Spleen (tissue), 13 donors: ENCODE measurements at regions of chr18 and their contacts with region 1.

Region 1: GRCh38 chr18:40832362-40832761 is 1122.7 kb upstream of the PIK3C3 start:
- DNase-seq: no peak
- H3K4me3 ChIP-seq: no peak overlapping the region
- H3K27ac ChIP-seq: no peak overlapping the region
- H3K4me1 ChIP-seq: no peaks in the 10 kb centered on the region
- H3K27me3 ChIP-seq: no peaks in the 10 kb centered on the region
- CTCF ChIP-seq: no peak
- POLR2A ChIP-seq: no peak

Region 2: DNA sequence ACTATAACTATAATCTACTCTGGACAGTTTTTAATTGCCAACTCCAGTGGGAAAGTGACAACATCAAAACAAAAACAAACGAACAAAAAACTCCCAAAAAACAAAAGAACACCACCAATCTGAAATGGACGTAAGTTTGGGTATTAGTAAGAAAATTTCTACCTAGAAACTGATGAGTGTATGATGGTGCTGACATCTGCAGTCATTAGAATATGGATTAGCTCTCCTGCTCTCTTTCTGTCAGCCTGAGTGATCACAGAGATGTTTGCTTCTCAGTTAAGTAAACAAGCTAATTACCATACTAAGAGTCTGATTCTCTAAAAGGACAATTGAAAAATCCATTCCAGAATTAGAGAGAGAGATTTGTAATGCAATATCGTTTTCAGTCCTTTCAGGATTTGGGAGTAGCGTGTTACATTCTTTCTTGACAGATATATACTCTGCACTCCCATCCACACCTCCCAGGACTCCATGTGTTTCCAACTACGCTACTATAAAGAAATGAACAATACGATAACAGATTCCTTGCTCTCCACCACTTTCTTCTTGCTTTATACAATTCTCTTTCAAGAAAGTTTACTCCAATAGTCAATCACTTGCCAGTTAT is 224.7 kb before region 1 on chr18:
- intact Hi-C with region 1: no loop called
- DNase-seq: no peak
- H3K4me3 ChIP-seq: no peak overlapping the region
- H3K27ac ChIP-seq: no peak overlapping the region
- H3K4me1 ChIP-seq: no peaks in the 10 kb centered on the region
- H3K27me3 ChIP-seq: no peaks in the 10 kb centered on the region
- CTCF ChIP-seq: no peak
- POLR2A ChIP-seq: no peak

Region 3: GRCh38 chr18:40670668-40671375 is 161.5 kb before region 1 on chr18:
- intact Hi-C with region 1: no loop called
- DNase-seq: no peak
- H3K4me3 ChIP-seq: no peak overlapping the region
- H3K27ac ChIP-seq: no peak overlapping the region
- H3K4me1 ChIP-seq: no peaks in the 10 kb centered on the region
- H3K27me3 ChIP-seq: no peaks in the 10 kb centered on the region
- CTCF ChIP-seq: no peak
- POLR2A ChIP-seq: no peak

Region 4: DNA sequence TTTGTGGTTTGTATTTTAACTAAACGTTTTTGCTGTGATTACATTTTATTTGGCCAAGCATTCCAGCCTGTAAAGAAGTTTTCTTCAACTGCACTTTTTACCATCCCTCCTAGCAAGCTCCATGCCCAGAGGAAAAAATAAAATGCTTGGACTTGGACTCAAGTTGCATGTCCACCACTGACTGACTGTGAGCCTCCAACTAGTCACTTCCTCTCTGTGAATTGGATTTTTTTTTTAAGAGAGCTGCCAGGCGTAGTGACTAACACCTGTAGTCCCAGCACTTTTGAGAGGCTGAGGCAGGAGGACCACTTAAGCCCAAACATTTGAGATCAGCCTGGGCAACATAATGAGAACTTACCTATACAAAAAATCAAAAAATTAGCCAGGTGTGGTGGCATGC is 62.6 kb before region 1 on chr18:
- intact Hi-C with region 1: loop called (anchors 10 kb)
- DNase-seq: no peak
- H3K4me3 ChIP-seq: no peak overlapping the region
- H3K27ac ChIP-seq: no peak overlapping the region
- H3K4me1 ChIP-seq: no peaks in the 10 kb centered on the region
- H3K27me3 ChIP-seq: no peaks in the 10 kb centered on the region
- CTCF ChIP-seq: no peak
- POLR2A ChIP-seq: no peak

Region 5: DNA sequence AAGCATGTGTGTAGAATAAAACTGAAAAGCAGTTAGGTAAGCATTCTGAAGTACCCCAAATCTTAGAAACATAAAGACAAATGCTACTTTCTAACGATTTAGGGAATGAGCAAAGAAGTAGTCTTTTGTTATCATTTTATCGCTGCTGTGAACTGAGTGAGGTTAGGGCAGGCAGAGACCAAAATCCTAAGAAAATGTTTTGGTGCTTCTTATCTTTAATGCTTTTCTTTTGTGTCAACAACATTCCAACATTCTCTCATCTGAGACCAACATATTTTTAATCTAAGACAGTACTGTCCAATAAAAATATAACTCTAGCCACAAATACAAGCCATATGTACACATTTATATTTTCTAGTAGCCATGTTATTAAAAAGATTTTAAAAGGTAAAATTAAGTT is 333.3 kb after region 1 on chr18:
- intact Hi-C with region 1: no loop called
- DNase-seq: no peak
- H3K4me3 ChIP-seq: no peak overlapping the region
- H3K27ac ChIP-seq: no peak overlapping the region
- H3K4me1 ChIP-seq: no peaks in the 10 kb centered on the region
- H3K27me3 ChIP-seq: no peaks in the 10 kb centered on the region
- CTCF ChIP-seq: no peak
- POLR2A ChIP-seq: no peak